ENCODE measurements at regions of chr7 and their contacts with region 1.

Region 1: DNA sequence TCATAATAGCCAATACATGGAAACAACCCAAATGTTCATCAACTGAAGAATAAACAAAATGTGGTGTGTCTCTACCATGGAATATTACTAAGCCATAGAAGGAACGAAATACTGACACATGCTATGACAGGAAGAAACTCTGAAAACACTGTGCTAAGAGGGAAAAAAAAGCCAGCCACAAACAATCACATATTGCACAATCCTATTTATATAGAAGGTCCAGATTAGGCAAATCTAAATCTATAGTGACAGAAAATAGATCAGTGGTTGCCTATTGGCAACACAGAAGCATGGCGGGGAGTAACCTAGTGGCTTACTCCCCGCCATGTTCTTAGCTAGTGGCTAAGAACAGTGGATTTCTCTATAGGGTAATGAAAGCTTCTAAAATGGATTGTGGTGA is 48.0 kb downstream of the MDH2 start:
- DNase-seq: no peak
- H3K4me3 ChIP-seq: no peak overlapping the region
- H3K27ac ChIP-seq: no peak overlapping the region
- H3K4me1 ChIP-seq: peaks cover 10% of the 10 kb centered on the region
- H3K27me3 ChIP-seq: no peaks in the 10 kb centered on the region
- CTCF ChIP-seq: no peak

Region 2: DNA sequence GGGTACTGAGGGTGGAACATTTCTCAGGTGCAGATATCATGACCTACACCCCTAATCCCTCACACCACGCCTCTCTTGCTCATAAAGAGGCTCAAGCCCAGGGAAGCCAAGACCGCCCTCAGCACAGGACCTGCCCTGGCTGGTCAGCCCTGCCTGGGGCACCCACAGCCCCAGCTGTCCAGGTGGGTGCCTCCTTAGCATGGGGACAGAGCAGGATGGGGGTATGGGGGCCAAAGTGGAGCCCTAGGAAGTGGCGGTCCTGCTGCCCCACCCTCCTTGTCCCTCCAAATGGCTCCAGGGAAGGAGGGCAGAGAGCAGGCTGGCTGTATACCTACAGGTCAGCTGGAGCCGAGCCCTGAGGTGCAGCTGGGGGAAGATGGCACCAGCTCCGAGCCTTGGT is 196.8 kb before region 1 on chr7:
- CTCF ChIA-PET with region 1: no interaction called
- dilution Hi-C with region 1: no loop called
- in situ Hi-C with region 1: no loop called
- intact Hi-C with region 1: no loop called
- DNase-seq: no peak
- H3K4me3 ChIP-seq: no peak overlapping the region
- H3K27ac ChIP-seq: no peak overlapping the region
- H3K4me1 ChIP-seq: no peaks in the 10 kb centered on the region
- H3K27me3 ChIP-seq: no peaks in the 10 kb centered on the region
- CTCF ChIP-seq: no peak

Region 3: DNA sequence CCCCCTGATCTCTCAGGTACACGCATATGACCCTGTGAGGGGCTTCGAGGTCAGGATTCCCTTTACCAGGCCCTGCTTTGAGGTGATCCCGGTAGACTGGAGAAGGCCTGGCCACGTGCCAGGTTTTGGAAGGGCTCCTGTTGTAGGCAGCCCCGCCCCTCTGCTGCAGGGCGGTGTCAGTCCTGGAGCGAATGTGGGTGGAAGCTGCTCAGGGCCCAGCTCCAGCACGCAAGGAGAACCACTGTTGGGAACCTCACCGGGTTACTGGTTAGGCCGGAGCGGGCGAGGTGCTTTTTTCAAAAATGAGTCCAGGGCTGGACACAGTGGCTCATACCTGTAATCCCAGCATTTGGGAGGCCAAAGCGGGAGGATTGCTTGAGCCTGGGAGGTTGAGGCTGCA is 32.3 kb before region 1 on chr7:
- CTCF ChIA-PET with region 1: no interaction called
- dilution Hi-C with region 1: loop called (anchors 5 kb)
- in situ Hi-C with region 1: no loop called
- intact Hi-C with region 1: no loop called
- DNase-seq: peak; percentile 32
- H3K4me3 ChIP-seq: no peak overlapping the region
- H3K27ac ChIP-seq: no peak overlapping the region
- H3K4me1 ChIP-seq: peaks cover 9% of the 10 kb centered on the region
- H3K27me3 ChIP-seq: no peaks in the 10 kb centered on the region
- CTCF ChIP-seq: no peak